ENCODE measurements at regions of chr13 and their contacts with region 1.

Region 1: GRCh38 chr13:95676762-95677563 is at the start of gene DNAJC3:
- DNase-seq: peak; percentile 98
- H3K4me3 ChIP-seq: peak within 1 kb of the TSS; percentile 90 to 97 (median 96)
- H3K27ac ChIP-seq: peak within 1 kb of the TSS; percentile 73
- H3K4me1 ChIP-seq: peaks cover 17% of the 10 kb centered on the region
- H3K27me3 ChIP-seq: no peaks in the 10 kb centered on the region
- CTCF ChIP-seq: no peak
- total RNA-seq, gene DNAJC3: 46.1 to 50.0 TPM

Region 2: GRCh38 chr13:95644601-95645052 is 32.3 kb before region 1 on chr13 and contains the start of gene DZIP1:
- CTCF ChIA-PET with region 1: no interaction called
- dilution Hi-C with region 1: no loop called
- in situ Hi-C with region 1: no loop called
- intact Hi-C with region 1: loop called (anchors 2 kb)
- DNase-seq: peak; percentile 77
- H3K4me3 ChIP-seq: peak within 1 kb of the TSS; percentile 63 to 71 (median 70)
- H3K27ac ChIP-seq: peak within 1 kb of the TSS; percentile 36
- H3K4me1 ChIP-seq: peaks cover 23% of the 10 kb centered on the region
- H3K27me3 ChIP-seq: no peaks in the 10 kb centered on the region
- CTCF ChIP-seq: no peak
- total RNA-seq, gene DZIP1: 28.3 to 29.3 TPM

Region 3: GRCh38 chr13:95660981-95661581 is 15.9 kb before region 1 on chr13:
- CTCF ChIA-PET with region 1: interaction called, 17 read pairs
- dilution Hi-C with region 1: no loop called
- in situ Hi-C with region 1: no loop called
- intact Hi-C with region 1: no loop called
- DNase-seq: peak; percentile 24
- H3K4me3 ChIP-seq: no peak overlapping the region
- H3K27ac ChIP-seq: no peak overlapping the region
- H3K4me1 ChIP-seq: no peaks in the 10 kb centered on the region
- H3K27me3 ChIP-seq: no peaks in the 10 kb centered on the region
- CTCF ChIP-seq: peak; percentile 72 to 76

Region 4: GRCh38 chr13:95714142-95714829 is 37.3 kb after region 1 on chr13:
- CTCF ChIA-PET with region 1: no interaction called
- dilution Hi-C with region 1: no loop called
- in situ Hi-C with region 1: no loop called
- intact Hi-C with region 1: loop called (anchors 2 kb)
- DNase-seq: peak; percentile 89
- H3K4me3 ChIP-seq: no peak overlapping the region
- H3K27ac ChIP-seq: peak overlapping the region; percentile 68
- H3K4me1 ChIP-seq: peaks cover 18% of the 10 kb centered on the region
- H3K27me3 ChIP-seq: no peaks in the 10 kb centered on the region
- CTCF ChIP-seq: no peak

Region 5: GRCh38 chr13:95793018-95793555 is 116.1 kb after region 1 on chr13:
- CTCF ChIA-PET with region 1: no interaction called
- dilution Hi-C with region 1: no loop called
- in situ Hi-C with region 1: no loop called
- intact Hi-C with region 1: loop called (anchors 5 kb)
- DNase-seq: peak; percentile 48
- H3K4me3 ChIP-seq: no peak overlapping the region
- H3K27ac ChIP-seq: peak overlapping the region; percentile 12
- H3K4me1 ChIP-seq: peaks cover 6% of the 10 kb centered on the region
- H3K27me3 ChIP-seq: no peaks in the 10 kb centered on the region
- CTCF ChIP-seq: no peak